Activated T-helper 2 cell treated with anti-CD3 and anti-CD28 coated beads, Interferon-gamma antibody, Interleukin-2, Interleukin-4, amounts not matched to agents 10 μg/mL and 5 μg/mL and 100 μg/mL, durations not matched to agents 14 hours and 24 hours and 36 hours (primary cell): ENCODE measurements at regions of chr5 and their contacts with region 1.

Region 1: DNA sequence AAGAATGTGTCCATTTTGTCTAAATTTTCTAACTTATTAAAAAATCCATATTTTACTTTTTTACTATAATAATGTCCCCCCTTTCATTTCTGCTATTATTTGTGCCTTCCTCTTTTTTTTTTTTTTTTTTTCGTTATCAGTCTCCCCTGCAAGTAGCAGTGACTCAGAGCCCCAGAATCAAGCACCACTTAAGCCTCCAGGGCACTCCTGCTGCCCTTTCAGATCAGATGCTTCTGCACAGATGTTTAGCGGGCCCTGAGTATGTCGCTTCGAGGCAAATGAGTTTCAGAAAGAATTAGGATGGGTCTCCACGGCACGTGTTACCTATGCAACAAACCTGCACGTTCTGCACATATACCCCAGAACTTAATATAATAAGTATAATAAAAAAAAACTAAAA is 11.7 kb downstream of the MED7 start:
- DNase-seq: no peak
- H3K4me3 Mint-ChIP-seq: no peak overlapping the region
- H3K27ac Mint-ChIP-seq: no peak overlapping the region
- H3K4me1 Mint-ChIP-seq: peaks cover 32% of the 10 kb centered on the region
- H3K27me3 Mint-ChIP-seq: no peaks in the 10 kb centered on the region

Region 2: GRCh38 chr5:155136216-155136850 is 1994.6 kb before region 1 on chr5:
- intact Hi-C with region 1: loop called (anchors 5 kb)
- DNase-seq: no peak
- H3K4me3 Mint-ChIP-seq: no peak overlapping the region
- H3K27ac Mint-ChIP-seq: no peak overlapping the region
- H3K4me1 Mint-ChIP-seq: peaks cover 2% of the 10 kb centered on the region
- H3K27me3 Mint-ChIP-seq: peaks cover 10% of the 10 kb centered on the region

Region 3: DNA sequence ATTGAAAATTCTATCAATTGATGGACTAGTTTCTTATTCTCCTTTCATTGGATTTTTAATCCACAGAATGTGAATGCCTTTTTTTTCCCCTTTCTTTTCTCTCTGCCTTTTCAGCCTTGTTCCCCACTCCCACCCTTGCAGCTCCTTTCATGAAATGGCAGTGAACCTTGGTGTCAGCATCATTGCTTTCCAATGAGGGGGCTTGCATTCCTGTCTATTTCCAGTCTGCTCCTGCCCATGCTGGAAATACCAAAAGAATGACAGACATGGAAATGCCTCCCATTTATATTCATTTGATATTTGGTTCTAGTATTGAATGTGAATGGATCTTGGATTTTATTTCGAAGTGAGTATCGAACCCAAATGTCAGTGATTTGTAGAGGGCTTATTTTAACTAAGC is 966.6 kb before region 1 on chr5:
- intact Hi-C with region 1: loop called (anchors 10 kb)
- DNase-seq: no peak
- H3K4me3 Mint-ChIP-seq: no peak overlapping the region
- H3K27ac Mint-ChIP-seq: no peak overlapping the region
- H3K4me1 Mint-ChIP-seq: no peaks in the 10 kb centered on the region
- H3K27me3 Mint-ChIP-seq: no peaks in the 10 kb centered on the region

Region 4: DNA sequence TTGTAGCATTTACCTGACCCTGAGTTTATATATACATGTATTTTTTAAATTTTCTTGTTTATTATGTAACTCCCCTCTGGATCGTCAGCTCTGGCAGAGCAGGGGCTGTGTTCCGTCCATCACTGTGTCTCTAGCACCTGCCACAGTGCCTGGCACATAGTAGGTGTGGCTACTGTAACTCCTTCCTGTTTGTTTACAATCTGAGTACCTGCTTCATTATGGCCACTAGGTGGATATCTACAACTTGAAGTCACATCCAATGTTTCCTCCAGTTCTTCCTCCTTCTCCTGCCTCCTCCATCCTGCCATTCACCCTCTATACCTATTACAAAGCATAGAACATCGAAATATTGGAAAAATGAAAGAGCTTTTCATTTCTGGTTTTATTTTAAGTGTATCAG is 295.0 kb before region 1 on chr5:
- intact Hi-C with region 1: loop called (anchors 10 kb)
- DNase-seq: no peak
- H3K4me3 Mint-ChIP-seq: no peak overlapping the region
- H3K27ac Mint-ChIP-seq: no peak overlapping the region
- H3K4me1 Mint-ChIP-seq: peaks cover 8% of the 10 kb centered on the region
- H3K27me3 Mint-ChIP-seq: peaks cover 2% of the 10 kb centered on the region

Region 5: GRCh38 chr5:157026789-157027424 is 104.0 kb before region 1 on chr5:
- intact Hi-C with region 1: loop called (anchors 1 kb)
- DNase-seq: no peak
- H3K4me3 Mint-ChIP-seq: no peak overlapping the region
- H3K27ac Mint-ChIP-seq: peak overlapping the region; percentile 89
- H3K4me1 Mint-ChIP-seq: peaks cover 85% of the 10 kb centered on the region
- H3K27me3 Mint-ChIP-seq: no peaks in the 10 kb centered on the region

Region 6: GRCh38 chr5:157116483-157116954 is 14.4 kb before region 1 on chr5:
- intact Hi-C with region 1: loop called (anchors 1 kb)
- DNase-seq: no peak
- H3K4me3 Mint-ChIP-seq: no peak overlapping the region
- H3K27ac Mint-ChIP-seq: peak overlapping the region; percentile 74
- H3K4me1 Mint-ChIP-seq: peaks cover 31% of the 10 kb centered on the region
- H3K27me3 Mint-ChIP-seq: no peaks in the 10 kb centered on the region